Right ventricle myocardium superior (tissue), 1 donor: ENCODE measurements at regions of chr7 and their contacts with region 1.

Region 1: DNA sequence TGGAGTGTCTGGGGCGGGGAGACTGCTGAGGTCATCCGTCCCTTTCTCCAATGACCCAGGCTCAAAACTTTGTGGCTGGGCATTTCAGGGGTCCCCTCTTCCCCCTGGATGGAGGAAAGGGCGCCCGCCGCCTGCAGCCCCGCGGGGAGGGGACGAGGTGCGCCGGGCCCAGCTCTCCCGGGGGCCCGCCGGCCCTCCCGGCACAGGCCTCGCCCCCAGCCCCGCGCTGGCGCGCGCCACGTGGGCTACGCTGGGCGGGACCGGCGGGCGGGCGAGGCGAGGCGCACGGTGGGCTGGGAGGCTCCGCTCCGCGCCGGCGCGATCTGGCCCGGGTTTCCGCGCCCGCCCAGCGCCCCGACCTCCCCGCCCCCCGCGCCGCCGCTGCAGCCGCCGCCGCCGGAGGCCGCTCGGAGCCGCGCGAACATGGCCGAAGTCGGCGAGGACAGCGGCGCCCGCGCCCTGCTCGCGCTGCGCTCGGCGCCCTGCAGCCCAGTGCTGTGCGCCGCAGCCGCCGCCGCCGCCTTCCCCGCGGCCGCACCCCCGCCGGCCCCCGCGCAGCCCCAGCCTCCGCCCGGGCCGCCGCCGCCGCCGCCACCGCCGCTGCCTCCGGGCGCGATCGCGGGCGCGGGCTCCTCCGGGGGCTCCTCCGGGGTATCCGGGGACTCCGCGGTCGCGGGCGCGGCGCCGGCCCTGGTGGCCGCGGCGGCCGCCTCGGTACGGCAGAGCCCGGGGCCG is at the start of gene FOXK1:
- DNase-seq: peak; percentile 87
- ATAC-seq: peak; percentile 81
- total RNA-seq, gene FOXK1: 16.8 TPM

Region 2: DNA sequence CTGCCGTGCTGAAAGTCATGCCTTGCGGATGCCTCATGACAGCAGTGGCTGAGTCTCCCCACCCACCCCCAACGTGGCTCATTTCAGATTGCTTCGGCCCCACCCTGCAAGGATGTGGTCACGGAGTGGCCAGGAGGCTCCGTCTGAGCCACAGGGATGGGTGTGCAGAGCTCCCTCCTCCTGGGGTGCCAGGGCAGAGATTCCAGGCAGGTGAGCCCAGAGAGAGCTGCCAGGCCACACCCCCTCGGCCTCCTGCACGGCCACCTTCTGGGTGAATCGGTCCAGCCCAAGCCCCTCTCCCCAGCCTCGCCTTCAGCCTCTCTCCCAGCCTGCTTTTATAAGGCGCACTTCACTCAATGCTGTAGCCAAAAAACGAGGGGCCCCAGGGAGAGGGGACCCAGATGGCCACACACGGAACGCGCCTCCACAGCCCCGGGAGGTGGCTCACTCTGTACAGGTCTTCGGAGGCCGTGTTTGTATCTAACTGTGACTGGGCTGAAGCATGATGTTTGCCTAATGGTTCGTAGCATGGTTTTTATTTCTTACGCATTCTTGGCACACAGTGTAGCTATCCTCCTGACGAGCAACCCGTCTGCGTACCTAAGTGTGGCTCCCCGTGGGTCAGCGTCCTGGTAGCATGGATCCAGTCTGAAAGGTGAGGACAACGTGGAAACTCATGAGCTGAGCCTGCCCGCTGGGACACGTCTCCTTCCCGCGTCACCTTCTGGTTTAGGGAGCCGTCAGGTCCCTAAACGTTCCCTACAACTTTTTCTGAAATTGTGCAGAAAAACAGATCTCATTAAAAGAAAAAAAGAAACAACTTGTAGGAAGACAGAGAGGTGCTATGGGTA is 413.7 kb before region 1 on chr7:
- intact Hi-C with region 1: no loop called
- DNase-seq: no peak
- ATAC-seq: no peak

Region 3: DNA sequence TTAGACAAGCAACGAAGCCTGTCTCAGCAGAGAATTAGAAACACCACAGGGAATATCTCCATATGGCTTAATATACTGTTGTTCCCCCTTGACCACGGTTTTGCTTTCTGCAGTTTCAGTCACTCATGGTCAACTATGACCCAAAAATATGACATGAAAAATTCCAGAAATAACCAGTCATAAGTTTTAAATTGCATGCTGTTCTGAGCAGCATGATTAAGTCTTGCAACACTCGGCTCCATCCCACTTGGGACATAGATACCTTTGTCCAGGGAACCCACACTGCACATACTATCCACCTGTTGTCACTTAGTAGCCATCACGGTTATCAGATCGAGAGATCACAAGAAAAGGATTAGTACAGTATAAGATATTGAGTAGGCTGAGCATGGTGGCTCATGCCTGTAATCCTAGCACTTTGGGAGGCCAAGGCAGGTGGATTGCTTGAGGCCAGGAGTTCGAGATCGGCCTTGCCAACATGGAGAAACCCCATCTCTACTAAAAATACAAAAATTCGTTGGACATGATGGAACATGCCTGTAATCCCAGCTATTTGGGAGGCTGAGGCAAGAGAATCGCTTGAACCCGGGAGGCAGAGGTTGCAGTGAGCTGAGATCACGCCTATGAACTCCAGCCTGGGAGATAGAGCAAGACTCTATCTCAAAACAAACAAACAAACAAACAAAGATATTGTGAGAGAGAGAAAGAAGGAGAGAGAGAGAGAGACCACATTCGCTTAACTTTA is 60.5 kb before region 1 on chr7:
- intact Hi-C with region 1: no loop called
- DNase-seq: no peak
- ATAC-seq: no peak

Region 4: GRCh38 chr7:4641667-4642467 is 40.2 kb before region 1 on chr7:
- intact Hi-C with region 1: loop called (anchors 2 kb)
- DNase-seq: peak; percentile 98
- ATAC-seq: peak; percentile 99

Region 5: GRCh38 chr7:4738711-4739527 is 56.9 kb after region 1 on chr7:
- intact Hi-C with region 1: loop called (anchors 5 kb)
- DNase-seq: no peak
- ATAC-seq: peak; percentile 43

Region 6: DNA sequence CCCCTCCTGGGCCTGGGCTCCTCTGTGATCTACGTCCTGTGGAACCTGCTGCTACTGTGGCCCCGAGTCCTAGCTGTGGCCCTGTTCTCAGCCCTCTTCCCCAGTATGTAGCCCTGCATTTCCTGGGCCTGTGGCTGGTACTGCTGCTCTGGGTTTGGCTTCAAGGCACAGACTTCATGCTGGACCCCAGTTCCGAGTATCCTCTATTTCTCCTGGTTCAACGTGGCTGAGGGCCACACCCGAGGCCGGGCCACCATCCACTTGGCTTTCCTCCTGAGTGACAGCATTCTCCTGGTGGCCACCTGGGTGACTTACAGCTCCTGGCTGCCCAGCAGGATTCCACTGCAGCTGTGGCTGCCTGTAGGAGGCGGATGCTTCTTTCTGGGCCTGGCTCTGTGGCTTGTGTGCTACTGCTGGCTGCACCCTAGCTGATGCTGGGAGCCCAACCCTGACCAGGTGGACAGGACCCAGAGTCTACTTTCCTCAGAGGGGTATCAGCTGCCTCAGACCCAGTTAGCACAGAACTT is 314.7 kb after region 1 on chr7:
- intact Hi-C with region 1: no loop called
- DNase-seq: no peak
- ATAC-seq: no peak